MCF 10A (cell line): ENCODE measurements at regions of chr2 and their contacts with region 1.

Region 1: GRCh38 chr2:96760036-96760985 is at the start of gene CNNM4:
- DNase-seq: peak; percentile 93
- H3K4me3 Mint-ChIP-seq: peak within 1 kb of the TSS; percentile 69
- H3K27ac Mint-ChIP-seq: peak within 1 kb of the TSS; percentile 35
- H3K4me1 Mint-ChIP-seq: peaks cover 22% of the 10 kb centered on the region
- H3K27me3 Mint-ChIP-seq: no peaks in the 10 kb centered on the region
- CTCF ChIP-seq: no peak
- total RNA-seq, gene CNNM4: 5.0 and 6.3 TPM in 2 replicates

Region 2: GRCh38 chr2:96739633-96740428 is 20.5 kb before region 1 on chr2 and contains the start of gene LMAN2L:
- CTCF ChIA-PET with region 1: interaction called, 5 read pairs
- POLR2A ChIA-PET with region 1: interaction called, 4 read pairs
- intact Hi-C with region 1: loop called (anchors 2 kb)
- DNase-seq: peak; percentile 98
- H3K4me3 Mint-ChIP-seq: peak within 1 kb of the TSS; percentile 96
- H3K27ac Mint-ChIP-seq: peak within 1 kb of the TSS; percentile 97
- H3K4me1 Mint-ChIP-seq: peaks cover 5% of the 10 kb centered on the region
- H3K27me3 Mint-ChIP-seq: no peaks in the 10 kb centered on the region
- CTCF ChIP-seq: no peak
- total RNA-seq, gene LMAN2L: 6.5 and 7.1 TPM in 2 replicates

Region 3: DNA sequence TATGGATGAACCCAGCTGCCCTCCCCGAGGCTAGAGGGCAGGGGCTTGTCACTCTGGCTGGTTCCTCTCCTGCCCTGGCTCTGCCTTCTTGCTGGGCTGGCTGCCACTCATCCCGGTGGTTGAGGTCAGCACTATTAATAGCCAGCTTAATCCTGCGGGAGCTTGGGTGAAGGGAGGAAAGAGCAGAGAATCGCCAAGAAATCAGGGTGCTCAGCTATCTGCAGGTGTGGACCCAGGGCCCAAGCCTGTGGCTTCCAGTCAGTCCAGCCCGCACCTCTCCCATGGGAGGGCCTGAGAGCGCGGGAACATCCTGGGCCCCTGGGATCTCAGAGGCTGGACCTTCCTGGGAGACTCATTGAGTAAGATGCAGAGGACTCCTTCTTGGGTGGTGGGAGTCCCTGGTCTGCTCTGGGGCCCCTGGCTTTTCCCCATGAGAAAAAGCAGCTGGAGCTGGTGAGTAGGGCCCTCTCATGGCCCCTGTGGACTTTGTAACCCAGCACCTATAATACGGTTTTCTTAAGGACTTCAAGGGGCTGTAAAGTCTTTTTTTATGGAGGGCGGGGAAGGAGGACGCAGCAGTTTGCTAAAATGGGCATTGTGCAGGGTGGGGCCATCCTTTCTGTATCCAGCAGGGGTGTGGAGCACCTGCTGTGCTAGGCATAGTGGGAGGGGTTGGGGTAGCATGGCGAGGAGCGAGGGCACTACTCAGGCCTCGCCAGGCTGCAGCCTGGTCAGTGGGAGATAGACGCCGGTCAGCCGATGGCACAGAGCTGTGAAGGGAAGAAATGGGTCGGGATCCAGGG is 28.3 kb after region 1 on chr2:
- CTCF ChIA-PET with region 1: interaction called, 40 read pairs
- POLR2A ChIA-PET with region 1: interaction called, 13 read pairs
- intact Hi-C with region 1: loop called (anchors 2 kb)
- DNase-seq: peak; percentile 54
- H3K4me3 Mint-ChIP-seq: no peak overlapping the region
- H3K27ac Mint-ChIP-seq: peak overlapping the region; percentile 92
- H3K4me1 Mint-ChIP-seq: peaks cover 15% of the 10 kb centered on the region
- H3K27me3 Mint-ChIP-seq: no peaks in the 10 kb centered on the region
- CTCF ChIP-seq: no peak

Region 4: DNA sequence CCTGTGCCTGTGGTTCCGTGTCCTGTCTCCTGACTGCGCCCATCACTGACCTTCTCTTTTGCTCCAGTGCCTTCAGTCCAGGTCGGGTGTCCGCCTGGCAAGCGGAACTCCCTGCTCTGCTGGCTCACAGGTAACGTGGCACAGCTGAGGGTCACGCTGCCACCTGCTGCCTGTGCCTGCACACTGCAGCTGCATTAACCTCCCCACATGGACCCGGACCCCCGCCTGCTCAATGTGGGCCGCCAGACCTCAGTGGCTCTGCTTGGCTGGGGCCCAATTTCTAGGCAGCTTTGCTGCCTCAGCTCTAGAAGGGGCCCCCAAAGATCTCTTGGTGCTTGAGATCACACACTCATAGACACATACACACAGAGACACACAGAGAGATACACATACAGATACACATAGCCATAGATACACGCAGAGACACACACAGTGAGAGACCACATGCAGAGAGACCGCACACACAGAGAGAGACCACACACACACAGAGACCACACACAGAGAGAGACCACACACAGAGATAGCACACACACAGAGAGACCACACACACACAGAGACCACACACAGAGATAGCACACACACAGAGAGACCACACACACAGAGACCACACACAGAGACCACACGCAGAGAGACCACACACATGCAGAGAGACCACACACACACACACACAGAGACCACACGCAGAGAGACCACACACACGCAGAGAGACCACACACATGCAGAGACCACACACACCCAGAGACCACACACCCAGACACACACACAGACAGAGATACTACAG is 40.9 kb after region 1 on chr2:
- CTCF ChIA-PET with region 1: interaction called, 15 read pairs
- POLR2A ChIA-PET with region 1: interaction called, 4 read pairs
- intact Hi-C with region 1: loop called (anchors 1 kb)
- DNase-seq: peak; percentile 64
- H3K4me3 Mint-ChIP-seq: no peak overlapping the region
- H3K27ac Mint-ChIP-seq: no peak overlapping the region
- H3K4me1 Mint-ChIP-seq: no peaks in the 10 kb centered on the region
- H3K27me3 Mint-ChIP-seq: no peaks in the 10 kb centered on the region
- CTCF ChIP-seq: peak; percentile 92